ENCODE measurements at regions of chrX and their contacts with region 1.

Region 1: DNA sequence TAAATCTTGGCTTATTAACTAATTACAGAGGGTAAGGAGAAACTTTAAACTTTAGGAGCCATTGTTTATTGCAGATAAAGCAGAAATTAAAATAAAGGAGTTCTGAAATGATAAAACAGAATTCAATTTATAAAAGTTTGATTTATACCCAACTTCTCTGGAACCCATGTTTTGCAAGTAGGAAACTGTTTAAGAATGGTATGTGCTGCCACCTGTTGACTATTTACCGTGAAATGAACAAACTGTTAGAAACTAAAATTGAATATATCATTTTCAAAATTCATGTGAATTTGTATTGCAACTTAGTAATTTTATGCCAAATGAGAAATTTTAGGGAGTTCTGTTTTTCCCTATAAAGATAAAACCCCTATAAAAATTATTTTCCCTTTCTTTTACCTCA is 11.0 kb upstream of the TBC1D8B start:
- DNase-seq: no peak
- H3K4me3 ChIP-seq: no peak overlapping the region
- CTCF ChIP-seq: no peak

Region 2: GRCh38 chrX:106481341-106481740 is 310.2 kb before region 1 on chrX:
- CTCF ChIA-PET with region 1: interaction called, 10 read pairs
- POLR2A ChIA-PET with region 1: no interaction called
- DNase-seq: no peak
- H3K4me3 ChIP-seq: no peak overlapping the region
- CTCF ChIP-seq: peak; percentile 31

Region 3: GRCh38 chrX:107025545-107025944 is 234.1 kb after region 1 on chrX:
- CTCF ChIA-PET with region 1: no interaction called
- POLR2A ChIA-PET with region 1: no interaction called
- DNase-seq: no peak
- H3K4me3 ChIP-seq: no peak overlapping the region
- CTCF ChIP-seq: peak; percentile 40

Measured in AG04449 (cell line).